Lower lobe of right lung (tissue), 2 donors: ENCODE measurements at regions of chr7 and their contacts with region 1.

Region 1: DNA sequence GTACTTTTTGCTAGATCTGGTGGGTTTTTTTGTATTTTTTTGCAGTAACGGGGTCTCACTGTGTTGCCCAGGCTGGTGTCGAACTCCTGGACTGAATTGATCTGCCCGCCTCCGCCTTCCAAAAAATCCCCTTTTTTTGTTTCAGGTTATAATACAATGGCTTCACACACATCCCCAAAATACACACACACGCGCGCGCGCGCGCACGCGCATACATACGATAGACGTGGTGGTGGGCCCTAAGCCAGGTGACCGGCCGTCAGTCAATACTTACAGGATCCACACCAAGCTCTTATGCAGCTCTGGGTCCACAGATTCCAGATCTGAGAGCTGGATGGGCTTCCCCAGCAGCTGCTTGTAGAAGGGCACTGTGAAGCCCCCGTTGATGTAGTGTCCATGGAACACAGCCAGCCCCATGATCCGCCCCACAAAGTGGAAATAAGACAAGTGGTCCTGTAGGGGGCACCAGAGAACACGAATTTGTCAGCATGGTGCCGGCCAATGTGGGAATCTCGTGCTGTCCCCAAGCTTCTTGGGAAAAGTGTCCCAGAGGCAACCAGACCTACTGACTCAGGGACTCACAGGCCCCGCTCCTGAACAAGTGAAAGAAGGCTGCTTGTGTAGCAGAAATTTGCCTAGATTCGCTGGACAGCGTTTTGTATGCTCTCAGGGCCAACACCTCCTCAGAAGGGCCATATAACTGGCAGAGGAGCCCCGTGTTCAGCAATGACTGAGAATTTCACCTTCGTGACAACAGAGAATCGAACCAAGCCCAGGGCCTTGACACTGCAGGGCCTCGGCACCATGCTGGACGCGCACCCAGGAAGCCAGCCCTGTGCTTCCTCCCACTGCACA is 103.6 kb downstream of the SMURF1 start:
- DNase-seq: peak; percentile 65
- ATAC-seq: peak; percentile 88 to 89
- H3K4me3 ChIP-seq: no peak overlapping the region
- H3K27ac ChIP-seq: no peak overlapping the region
- H3K4me1 ChIP-seq: peaks cover 7% of the 10 kb centered on the region
- H3K27me3 ChIP-seq: no peaks in the 10 kb centered on the region
- CTCF ChIP-seq: peak; percentile 75

Region 2: DNA sequence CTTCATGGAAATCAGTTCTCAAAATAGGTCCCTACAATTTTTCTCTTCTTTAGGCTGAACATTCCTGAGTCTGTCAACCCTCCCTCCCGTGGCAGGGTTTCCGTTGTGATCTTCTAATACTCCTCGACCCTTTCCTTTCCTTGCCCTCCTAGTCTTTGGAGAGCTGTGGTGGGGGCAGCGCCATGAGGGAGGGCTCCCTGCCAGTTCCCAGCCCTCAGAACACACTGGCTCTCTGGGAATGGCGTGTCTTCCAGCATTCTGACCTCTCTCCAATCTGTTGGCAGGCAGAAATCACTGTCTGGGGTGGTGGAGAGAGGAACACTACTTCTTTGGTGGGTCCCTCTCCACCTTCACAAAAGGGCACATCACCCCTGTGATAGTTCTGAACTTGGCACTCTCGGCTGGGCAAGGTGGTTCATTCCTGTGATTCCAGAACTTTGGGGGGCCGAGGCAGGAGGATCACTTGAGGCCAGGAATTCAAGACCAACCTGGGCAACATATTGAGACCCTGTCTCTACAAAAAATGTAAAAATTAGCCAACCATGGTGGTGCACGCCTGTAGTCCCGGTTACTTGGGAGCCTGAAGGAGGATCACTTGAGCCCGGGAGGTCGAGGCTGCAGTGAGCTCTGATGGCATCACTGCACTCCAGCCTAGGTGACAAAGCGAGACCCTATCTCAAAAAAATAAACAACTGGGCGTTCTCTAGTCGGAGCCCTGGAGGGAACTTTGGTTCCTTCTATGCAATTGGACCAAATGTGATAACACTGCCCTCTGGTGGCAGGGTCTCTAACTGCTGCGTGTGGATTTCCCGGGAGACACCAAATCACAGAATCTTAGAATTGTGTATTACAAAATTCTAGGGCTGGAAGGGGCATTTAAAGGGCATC is 272.2 kb after region 1 on chr7:
- intact Hi-C with region 1: loop called (anchors 10 kb)
- DNase-seq: peak; percentile 64
- ATAC-seq: peak; percentile 84 to 87
- H3K4me3 ChIP-seq: no peak overlapping the region
- H3K27ac ChIP-seq: no peak overlapping the region
- H3K4me1 ChIP-seq: peaks cover 10% of the 10 kb centered on the region
- H3K27me3 ChIP-seq: no peaks in the 10 kb centered on the region
- CTCF ChIP-seq: peak; percentile 92